ENCODE measurements at regions of chr2 and their contacts with region 1.

Region 1: DNA sequence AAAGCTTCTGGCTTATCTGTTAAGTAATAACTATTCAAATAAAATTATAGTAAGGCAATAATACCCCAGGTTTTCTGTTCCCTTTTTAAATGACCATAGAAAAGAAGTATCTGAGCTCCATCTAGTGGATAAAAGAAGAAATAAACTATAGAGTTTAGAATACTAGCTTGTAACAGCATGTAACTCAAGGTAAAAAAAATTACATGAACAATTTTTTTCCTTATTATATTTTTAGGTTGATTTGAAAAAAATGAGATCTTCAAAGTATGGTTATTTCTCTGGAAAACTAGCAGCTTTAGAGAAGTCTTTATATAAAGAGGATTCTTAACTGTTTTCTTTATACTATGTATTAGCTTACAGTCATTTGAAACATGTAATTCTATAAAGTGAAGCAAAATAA is 58.1 kb downstream of the NCKAP1 start:
- DNase-seq: peak in 5 of 9 donors; percentile 11 to 35 (median 21)
- ATAC-seq: no peak
- H3K4me3 ChIP-seq: no peak overlapping the region
- H3K4me3 Mint-ChIP-seq: no peak overlapping the region
- H3K27ac ChIP-seq: no peak overlapping the region
- H3K27ac Mint-ChIP-seq: no peak overlapping the region
- H3K4me1 ChIP-seq: no peaks in the 10 kb centered on the region
- H3K4me1 Mint-ChIP-seq: peaks cover 0 to 3% (median 0%) of the 10 kb centered on the region in 7 donors
- H3K27me3 ChIP-seq: no peaks in the 10 kb centered on the region
- H3K27me3 Mint-ChIP-seq: no peaks in the 10 kb centered on the region

Region 2: GRCh38 chr2:181128199-181128598 is 1851.9 kb before region 1 on chr2:
- CTCF ChIA-PET with region 1: no interaction called
- POLR2A ChIA-PET with region 1: no interaction called
- intact Hi-C with region 1: no loop called
- DNase-seq: no peak
- ATAC-seq: no peak
- H3K4me3 ChIP-seq: peak overlapping the region; percentile 10
- H3K4me3 Mint-ChIP-seq: peak overlapping the region in 9 of 10 donors; percentile 30 to 61 (median 47)
- H3K27ac ChIP-seq: no peak overlapping the region
- H3K27ac Mint-ChIP-seq: peak overlapping the region; percentile 33 to 96 (median 74)
- H3K4me1 ChIP-seq: peaks cover 42 to 72% of the 10 kb centered on the region in 2 donors
- H3K4me1 Mint-ChIP-seq: peaks cover 37 to 89% (median 76%) of the 10 kb centered on the region in 7 donors
- H3K27me3 ChIP-seq: no peaks in the 10 kb centered on the region
- H3K27me3 Mint-ChIP-seq: no peaks in the 10 kb centered on the region

Region 3: DNA sequence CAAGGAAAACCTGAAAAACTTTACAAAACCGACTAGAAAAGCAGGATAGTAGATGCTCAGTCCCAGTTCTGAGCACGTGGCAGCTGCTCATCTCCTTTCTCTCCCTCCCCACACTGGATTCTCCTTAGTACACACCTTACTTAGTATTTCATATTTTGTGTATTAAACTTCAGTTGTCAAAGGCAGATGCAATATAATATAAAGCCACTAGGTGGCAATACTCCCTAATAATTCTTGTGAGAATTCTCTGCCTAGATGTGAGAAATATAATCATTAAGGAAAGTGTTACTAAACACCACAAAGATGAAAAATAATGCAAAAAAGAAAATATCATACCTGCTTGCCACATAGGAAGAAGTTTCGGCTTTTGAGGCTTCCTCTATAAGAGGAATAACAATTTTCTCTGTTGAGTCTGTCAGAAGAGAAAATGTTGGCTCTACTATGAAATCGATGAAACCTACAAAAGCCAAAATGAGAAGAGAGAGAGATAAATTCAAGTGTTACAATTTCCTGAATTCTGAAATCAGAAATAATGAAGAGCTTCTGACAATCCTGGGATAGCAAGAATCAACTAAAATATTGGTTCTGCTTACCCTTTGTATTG is 793.9 kb before region 1 on chr2:
- CTCF ChIA-PET with region 1: interaction called, 4 read pairs
- POLR2A ChIA-PET with region 1: no interaction called
- intact Hi-C with region 1: loop called (anchors 1 kb)
- DNase-seq: peak in 4 of 9 donors; percentile 10 to 41 (median 24)
- ATAC-seq: peak; percentile 63
- H3K4me3 ChIP-seq: no peak overlapping the region
- H3K4me3 Mint-ChIP-seq: no peak overlapping the region
- H3K27ac ChIP-seq: no peak overlapping the region
- H3K27ac Mint-ChIP-seq: no peak overlapping the region
- H3K4me1 ChIP-seq: no peaks in the 10 kb centered on the region
- H3K4me1 Mint-ChIP-seq: no peaks in the 10 kb centered on the region
- H3K27me3 ChIP-seq: no peaks in the 10 kb centered on the region
- H3K27me3 Mint-ChIP-seq: peaks cover 5 to 17% (median 9%) of the 10 kb centered on the region in 5 donors

Region 4: GRCh38 chr2:182240862-182241371 is 739.2 kb before region 1 on chr2:
- CTCF ChIA-PET with region 1: no interaction called
- POLR2A ChIA-PET with region 1: no interaction called
- intact Hi-C with region 1: loop called (anchors 1 kb)
- DNase-seq: no peak
- ATAC-seq: peak; percentile 40
- H3K4me3 ChIP-seq: no peak overlapping the region
- H3K4me3 Mint-ChIP-seq: no peak overlapping the region
- H3K27ac ChIP-seq: no peak overlapping the region
- H3K27ac Mint-ChIP-seq: no peak overlapping the region
- H3K4me1 ChIP-seq: no peaks in the 10 kb centered on the region
- H3K4me1 Mint-ChIP-seq: peaks cover 0 to 7% (median 0%) of the 10 kb centered on the region in 7 donors
- H3K27me3 ChIP-seq: no peaks in the 10 kb centered on the region
- H3K27me3 Mint-ChIP-seq: peaks cover 0 to 3% (median 0%) of the 10 kb centered on the region in 5 donors

Region 5: DNA sequence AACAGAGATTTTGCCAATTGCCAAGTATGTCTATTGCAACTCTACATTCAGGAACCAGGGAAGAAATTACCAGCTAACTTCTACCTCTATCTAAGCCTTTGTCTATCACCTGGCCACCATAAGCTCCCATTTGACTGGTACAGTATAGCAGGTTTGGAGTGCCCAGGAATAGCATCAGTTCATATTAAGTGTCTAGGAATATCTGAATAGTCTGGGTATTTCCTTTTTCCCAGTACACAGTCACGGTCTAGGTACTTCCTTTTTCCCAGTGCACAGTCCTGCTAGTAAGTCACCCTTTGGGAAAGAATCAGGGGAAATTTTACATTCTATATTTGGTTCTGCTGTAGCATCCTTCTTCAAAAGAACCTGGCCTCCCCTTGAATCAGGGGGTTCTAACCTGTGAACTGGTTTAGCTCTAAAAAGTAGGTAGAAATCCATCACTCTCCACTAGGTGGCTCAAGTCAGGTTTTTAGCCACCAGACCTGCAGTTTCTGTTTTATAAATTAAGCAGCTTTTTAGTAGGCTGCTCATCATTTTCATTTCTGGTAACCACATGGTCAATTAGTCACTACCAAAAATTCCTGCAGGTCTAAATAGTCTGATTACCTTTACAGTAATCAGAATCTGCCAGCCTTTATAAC is 313.3 kb before region 1 on chr2:
- CTCF ChIA-PET with region 1: interaction called, 15 read pairs
- POLR2A ChIA-PET with region 1: no interaction called
- intact Hi-C with region 1: loop called (anchors 1 kb)
- DNase-seq: peak in 6 of 9 donors; percentile 6 to 40 (median 20)
- ATAC-seq: peak; percentile 70
- H3K4me3 ChIP-seq: no peak overlapping the region
- H3K4me3 Mint-ChIP-seq: no peak overlapping the region
- H3K27ac ChIP-seq: no peak overlapping the region
- H3K27ac Mint-ChIP-seq: no peak overlapping the region
- H3K4me1 ChIP-seq: no peaks in the 10 kb centered on the region
- H3K4me1 Mint-ChIP-seq: no peaks in the 10 kb centered on the region
- H3K27me3 ChIP-seq: no peaks in the 10 kb centered on the region
- H3K27me3 Mint-ChIP-seq: peaks cover 0 to 29% (median 0%) of the 10 kb centered on the region in 5 donors

Region 6: GRCh38 chr2:182763311-182763912 is 216.7 kb before region 1 on chr2:
- CTCF ChIA-PET with region 1: interaction called, 4 read pairs
- POLR2A ChIA-PET with region 1: no interaction called
- intact Hi-C with region 1: loop called (anchors 1 to 2 kb)
- DNase-seq: no peak
- ATAC-seq: no peak
- H3K4me3 ChIP-seq: no peak overlapping the region
- H3K4me3 Mint-ChIP-seq: no peak overlapping the region
- H3K27ac ChIP-seq: no peak overlapping the region
- H3K27ac Mint-ChIP-seq: no peak overlapping the region
- H3K4me1 ChIP-seq: no peaks in the 10 kb centered on the region
- H3K4me1 Mint-ChIP-seq: peaks cover 0 to 8% (median 0%) of the 10 kb centered on the region in 7 donors
- H3K27me3 ChIP-seq: no peaks in the 10 kb centered on the region
- H3K27me3 Mint-ChIP-seq: no peaks in the 10 kb centered on the region

Region 7: GRCh38 chr2:182784777-182785176 is 195.3 kb before region 1 on chr2:
- CTCF ChIA-PET with region 1: no interaction called
- POLR2A ChIA-PET with region 1: interaction called, 4 read pairs
- intact Hi-C with region 1: loop called (anchors 1 to 2 kb)
- DNase-seq: peak in 1 of 9 donors; percentile 5
- ATAC-seq: no peak
- H3K4me3 ChIP-seq: no peak overlapping the region
- H3K4me3 Mint-ChIP-seq: no peak overlapping the region
- H3K27ac ChIP-seq: no peak overlapping the region
- H3K27ac Mint-ChIP-seq: no peak overlapping the region
- H3K4me1 ChIP-seq: no peaks in the 10 kb centered on the region
- H3K4me1 Mint-ChIP-seq: no peaks in the 10 kb centered on the region
- H3K27me3 ChIP-seq: no peaks in the 10 kb centered on the region
- H3K27me3 Mint-ChIP-seq: no peaks in the 10 kb centered on the region

Region 8: DNA sequence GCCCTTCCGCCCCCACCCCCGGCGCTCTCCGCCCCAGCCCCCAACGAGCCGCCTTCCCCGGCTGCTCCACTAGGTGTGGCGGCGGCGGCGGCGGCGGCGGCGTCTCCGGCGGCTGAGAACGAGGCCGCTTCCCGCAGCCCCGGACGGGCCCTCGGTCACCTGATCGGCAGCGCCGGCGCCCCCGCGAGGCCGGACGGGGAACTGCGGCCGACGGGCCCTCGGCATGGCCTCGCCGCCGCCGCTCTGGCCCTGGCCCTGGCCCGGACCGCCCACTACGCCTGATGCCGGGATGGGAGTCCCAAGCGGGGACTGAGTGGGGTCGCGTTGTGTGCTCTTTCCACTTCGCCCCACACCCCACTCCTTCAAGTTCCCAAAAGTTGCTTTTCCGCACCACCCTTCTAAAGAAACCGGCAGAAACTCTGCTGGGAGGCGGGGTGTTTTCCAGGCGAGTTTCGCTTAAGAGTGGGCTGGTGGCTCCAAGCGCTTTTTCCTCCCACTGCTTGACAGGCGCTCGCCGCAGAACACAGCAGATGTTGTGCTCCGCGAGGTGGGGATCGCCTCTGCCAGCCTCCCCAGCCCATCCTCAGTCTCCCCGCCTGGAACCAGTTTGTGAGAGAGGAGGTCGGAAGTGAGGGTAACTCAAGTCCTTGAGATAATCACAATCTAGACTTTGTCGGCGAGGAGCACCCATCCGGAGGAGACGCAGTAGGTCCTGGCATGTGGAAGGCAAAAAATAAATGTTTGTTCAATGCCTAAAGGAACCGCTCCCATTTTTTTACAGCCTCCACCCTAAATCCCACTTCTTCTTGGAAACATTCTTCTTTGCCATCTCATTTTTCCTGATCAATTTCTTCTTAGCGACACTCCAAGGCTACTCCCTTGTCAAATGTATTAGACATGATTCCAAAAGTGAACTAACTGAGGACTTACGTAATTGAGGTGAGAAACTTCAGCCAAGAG is 58.5 kb after region 1 on chr2 and contains the start of gene NCKAP1:
- CTCF ChIA-PET with region 1: no interaction called
- POLR2A ChIA-PET with region 1: no interaction called
- intact Hi-C with region 1: loop called in 1 of 2 experiments (anchors 2 kb)
- DNase-seq: peak; percentile 67 to 94 (median 80)
- ATAC-seq: peak; percentile 92
- H3K4me3 ChIP-seq: peak within 1 kb of the TSS; percentile 77
- H3K4me3 Mint-ChIP-seq: peak within 1 kb of the TSS; percentile 84 to 95 (median 86)
- H3K27ac ChIP-seq: no peak within 1 kb of the TSS
- H3K27ac Mint-ChIP-seq: peak within 1 kb of the TSS in 7 of 9 donors; percentile 55 to 85 (median 69)
- H3K4me1 ChIP-seq: peaks cover 26% of the 10 kb centered on the region in 2 donors
- H3K4me1 Mint-ChIP-seq: peaks cover 24 to 37% (median 34%) of the 10 kb centered on the region in 7 donors
- H3K27me3 ChIP-seq: peaks cover 3 to 28% of the 10 kb centered on the region in 2 donors
- H3K27me3 Mint-ChIP-seq: peaks cover 42 to 80% (median 63%) of the 10 kb centered on the region in 5 donors
- total RNA-seq, gene NCKAP1: 2.4 to 4.1 (median 2.7) TPM

Region 9: DNA sequence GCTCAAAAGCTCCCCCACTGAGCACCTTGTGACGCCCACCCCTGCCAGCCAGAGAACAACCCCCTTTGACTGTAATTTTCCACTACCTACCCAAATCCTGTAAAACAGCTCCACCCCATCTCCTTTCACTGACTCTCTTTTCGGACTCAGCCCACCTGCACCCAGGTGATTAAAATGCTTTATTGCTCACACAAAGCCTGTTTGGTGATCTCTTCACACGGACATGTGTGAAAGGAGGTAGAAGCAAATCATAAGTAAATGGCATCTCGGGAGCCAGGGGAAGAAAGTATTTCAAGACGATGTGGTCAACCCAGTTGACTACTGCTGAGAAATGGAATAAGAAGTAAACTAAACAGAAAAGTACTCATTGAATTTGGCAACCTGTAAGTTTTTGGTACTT is 69.3 kb after region 1 on chr2:
- CTCF ChIA-PET with region 1: no interaction called
- POLR2A ChIA-PET with region 1: no interaction called
- intact Hi-C with region 1: no loop called
- DNase-seq: no peak
- ATAC-seq: no peak
- H3K4me3 ChIP-seq: no peak overlapping the region
- H3K4me3 Mint-ChIP-seq: no peak overlapping the region
- H3K27ac ChIP-seq: no peak overlapping the region
- H3K27ac Mint-ChIP-seq: no peak overlapping the region
- H3K4me1 ChIP-seq: no peaks in the 10 kb centered on the region
- H3K4me1 Mint-ChIP-seq: no peaks in the 10 kb centered on the region
- H3K27me3 ChIP-seq: no peaks in the 10 kb centered on the region
- H3K27me3 Mint-ChIP-seq: peaks cover 8 to 31% (median 21%) of the 10 kb centered on the region in 5 donors

Measured in naive thymus-derived CD4-positive, alpha-beta T cell (primary cell).